ENCODE measurements at regions of chr3 and their contacts with region 1.

Region 1: GRCh38 chr3:42961633-42962032 is 17.5 kb upstream of the GASK1A start:
- DNase-seq: no peak
- ATAC-seq: peak; percentile 69
- H3K4me3 ChIP-seq: no peak overlapping the region
- H3K27ac ChIP-seq: no peak overlapping the region
- H3K4me1 ChIP-seq: no peaks in the 10 kb centered on the region
- H3K27me3 ChIP-seq: no peaks in the 10 kb centered on the region

Region 2: GRCh38 chr3:43155464-43156121 is 194.0 kb after region 1 on chr3:
- intact Hi-C with region 1: loop called (anchors 2 kb)
- DNase-seq: peak; percentile 76 to 78
- ATAC-seq: peak; percentile 82
- H3K4me3 ChIP-seq: no peak overlapping the region
- H3K27ac ChIP-seq: no peak overlapping the region
- H3K4me1 ChIP-seq: no peaks in the 10 kb centered on the region
- H3K27me3 ChIP-seq: peaks cover 0 to 2% of the 10 kb centered on the region in 2 donors

Region 3: GRCh38 chr3:43497905-43498365 is 536.3 kb after region 1 on chr3:
- intact Hi-C with region 1: loop called in 1 of 2 experiments (anchors 10 kb)
- DNase-seq: no peak
- ATAC-seq: no peak
- H3K4me3 ChIP-seq: no peak overlapping the region
- H3K27ac ChIP-seq: no peak overlapping the region
- H3K4me1 ChIP-seq: no peaks in the 10 kb centered on the region
- H3K27me3 ChIP-seq: no peaks in the 10 kb centered on the region